ENCODE measurements at regions of chr7 and their contacts with region 1.

Region 1: GRCh38 chr7:23712368-23713284 is 2.6 kb downstream of the STK31 start:
- DNase-seq: peak in 3 of 14 experiments; percentile 58 to 69 (median 67)
- ATAC-seq: no peak
- H3K4me3 ChIP-seq: no peak overlapping the region
- H3K4me3 Mint-ChIP-seq: no peak overlapping the region
- H3K27ac ChIP-seq: no peak overlapping the region
- H3K27ac Mint-ChIP-seq: no peak overlapping the region
- H3K4me1 ChIP-seq: no peaks in the 10 kb centered on the region
- H3K4me1 Mint-ChIP-seq: no peaks in the 10 kb centered on the region
- H3K27me3 ChIP-seq: no peaks in the 10 kb centered on the region
- H3K27me3 Mint-ChIP-seq: no peaks in the 10 kb centered on the region
- CTCF ChIP-seq: peak; percentile 93

Region 2: GRCh38 chr7:23357190-23358093 is 355.2 kb before region 1 on chr7:
- CTCF ChIA-PET with region 1: no interaction called
- POLR2A ChIA-PET with region 1: no interaction called
- intact Hi-C with region 1: loop called (anchors 10 kb)
- DNase-seq: peak in 3 of 14 experiments; percentile 25 to 41 (median 39)
- ATAC-seq: peak; percentile 43
- H3K4me3 ChIP-seq: no peak overlapping the region
- H3K4me3 Mint-ChIP-seq: no peak overlapping the region
- H3K27ac ChIP-seq: no peak overlapping the region
- H3K27ac Mint-ChIP-seq: no peak overlapping the region
- H3K4me1 ChIP-seq: no peaks in the 10 kb centered on the region
- H3K4me1 Mint-ChIP-seq: peaks cover 15% of the 10 kb centered on the region
- H3K27me3 ChIP-seq: no peaks in the 10 kb centered on the region
- H3K27me3 Mint-ChIP-seq: peaks cover 12% of the 10 kb centered on the region
- CTCF ChIP-seq: peak; percentile 33

Region 3: DNA sequence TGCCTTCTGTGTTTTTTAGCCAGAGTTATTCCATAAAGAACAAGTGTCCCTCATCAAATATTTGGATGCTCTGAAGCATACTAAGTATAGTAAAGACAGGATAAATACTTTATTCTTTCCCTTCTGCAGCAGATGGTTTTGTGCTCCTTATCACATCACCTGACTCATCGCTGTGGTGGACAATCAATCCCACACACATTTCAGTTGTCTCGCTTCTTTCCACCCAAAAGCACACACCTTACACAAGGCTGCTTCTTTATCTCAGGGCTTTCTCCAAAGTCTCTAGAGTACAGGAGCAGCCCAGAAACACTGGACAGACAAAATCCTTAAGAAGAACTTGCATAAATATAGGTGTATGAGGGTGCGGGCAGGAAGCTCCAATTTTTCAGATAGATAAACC is 285.8 kb before region 1 on chr7:
- CTCF ChIA-PET with region 1: no interaction called
- POLR2A ChIA-PET with region 1: no interaction called
- intact Hi-C with region 1: loop called in 1 of 2 experiments (anchors 5 kb)
- DNase-seq: no peak
- ATAC-seq: no peak
- H3K4me3 ChIP-seq: no peak overlapping the region
- H3K4me3 Mint-ChIP-seq: no peak overlapping the region
- H3K27ac ChIP-seq: no peak overlapping the region
- H3K27ac Mint-ChIP-seq: no peak overlapping the region
- H3K4me1 ChIP-seq: no peaks in the 10 kb centered on the region
- H3K4me1 Mint-ChIP-seq: no peaks in the 10 kb centered on the region
- H3K27me3 ChIP-seq: peaks cover 2 to 15% of the 10 kb centered on the region in 2 experiments
- H3K27me3 Mint-ChIP-seq: peaks cover 29% of the 10 kb centered on the region
- CTCF ChIP-seq: no peak

Region 4: GRCh38 chr7:23570592-23571200 is 141.9 kb before region 1 on chr7:
- CTCF ChIA-PET with region 1: interaction called, 3 read pairs
- POLR2A ChIA-PET with region 1: interaction called, 3 read pairs
- intact Hi-C with region 1: loop called (anchors 1 kb)
- DNase-seq: peak; percentile 48 to 83 (median 59)
- ATAC-seq: peak; percentile 81
- H3K4me3 ChIP-seq: no peak overlapping the region
- H3K4me3 Mint-ChIP-seq: no peak overlapping the region
- H3K27ac ChIP-seq: no peak overlapping the region
- H3K27ac Mint-ChIP-seq: no peak overlapping the region
- H3K4me1 ChIP-seq: peaks cover 4% of the 10 kb centered on the region
- H3K4me1 Mint-ChIP-seq: no peaks in the 10 kb centered on the region
- H3K27me3 ChIP-seq: peaks cover 0 to 2% of the 10 kb centered on the region in 2 experiments
- H3K27me3 Mint-ChIP-seq: peaks cover 16% of the 10 kb centered on the region
- CTCF ChIP-seq: peak; percentile 79